ENCODE measurements at regions of chr1 and their contacts with region 1.

Region 1: GRCh38 chr1:230708631-230709580 is 5.0 kb downstream of the AGT start:
- DNase-seq: peak; percentile 82 to 94 (median 90)
- ATAC-seq: peak; percentile 12 to 77 (median 51)
- H3K4me3 ChIP-seq: peak overlapping the region in 2 of 3 donors; percentile 81 to 82
- H3K27ac ChIP-seq: peak overlapping the region in 2 of 3 donors; percentile 32 to 97
- H3K4me1 ChIP-seq: peaks cover 0 to 19% (median 3%) of the 10 kb centered on the region in 4 donors
- H3K27me3 ChIP-seq: no peaks in the 10 kb centered on the region
- CTCF ChIP-seq: no peak
- POLR2A ChIP-seq: peak; percentile 48

Region 2: DNA sequence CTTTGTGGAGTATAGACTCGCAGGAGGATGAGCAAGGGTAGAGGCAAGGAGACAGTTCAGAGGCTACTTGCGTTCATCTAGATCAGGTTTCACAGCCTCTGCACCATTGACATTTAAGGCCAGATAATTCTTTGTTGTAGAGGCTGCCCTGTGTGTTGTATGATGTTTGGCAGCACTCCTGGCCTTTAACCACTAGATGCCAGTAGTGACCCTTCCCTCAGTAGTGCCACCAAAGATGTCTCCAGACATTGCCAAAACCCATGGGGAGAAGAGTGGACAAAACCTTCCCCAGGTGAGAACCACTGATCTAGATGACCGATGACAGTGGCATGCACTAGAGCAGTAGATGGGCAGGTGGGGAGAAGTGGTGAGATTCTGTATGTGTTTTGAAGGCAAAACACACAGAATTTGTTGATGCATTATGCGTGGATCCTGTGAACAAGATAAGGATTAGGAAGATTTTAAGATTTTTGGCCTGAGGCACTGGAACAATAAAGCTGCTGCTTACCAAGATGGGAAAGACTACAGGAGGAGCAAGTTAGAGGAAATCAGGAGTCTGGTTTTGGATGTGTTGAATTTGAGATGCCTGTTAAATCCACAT is 76.5 kb before region 1 on chr1:
- intact Hi-C with region 1: loop called in 1 of 2 experiments (anchors 10 kb)
- DNase-seq: peak in 1 of 3 donors; percentile 59
- ATAC-seq: peak; percentile 96 to 99 (median 97)
- H3K4me3 ChIP-seq: no peak overlapping the region
- H3K27ac ChIP-seq: no peak overlapping the region
- H3K4me1 ChIP-seq: no peaks in the 10 kb centered on the region
- H3K27me3 ChIP-seq: no peaks in the 10 kb centered on the region
- CTCF ChIP-seq: peak; percentile 67 to 85 (median 78)
- POLR2A ChIP-seq: no peak

Region 3: GRCh38 chr1:230642263-230642959 is 66.5 kb before region 1 on chr1 and contains the start of gene COG2:
- intact Hi-C with region 1: loop called (anchors 10 kb)
- DNase-seq: peak; percentile 93 to 95 (median 94)
- ATAC-seq: peak; percentile 94 to 96 (median 95)
- H3K4me3 ChIP-seq: peak within 1 kb of the TSS; percentile 76 to 95 (median 94)
- H3K27ac ChIP-seq: peak within 1 kb of the TSS; percentile 68 to 82 (median 73)
- H3K4me1 ChIP-seq: peaks cover 0 to 40% (median 14%) of the 10 kb centered on the region in 4 donors
- H3K27me3 ChIP-seq: no peaks in the 10 kb centered on the region
- CTCF ChIP-seq: peak; percentile 100
- POLR2A ChIP-seq: peak; percentile 81
- total RNA-seq, gene COG2: 9.0 to 18.7 (median 13.0) TPM

Region 4: GRCh38 chr1:230753586-230754251 is 44.8 kb after region 1 on chr1:
- intact Hi-C with region 1: no loop called
- DNase-seq: peak in 1 of 3 donors; percentile 43
- ATAC-seq: peak in 3 of 4 donors; percentile 28 to 65 (median 38)
- H3K4me3 ChIP-seq: no peak overlapping the region
- H3K27ac ChIP-seq: no peak overlapping the region
- H3K4me1 ChIP-seq: no peaks in the 10 kb centered on the region
- H3K27me3 ChIP-seq: no peaks in the 10 kb centered on the region
- CTCF ChIP-seq: no peak
- POLR2A ChIP-seq: no peak

Region 5: DNA sequence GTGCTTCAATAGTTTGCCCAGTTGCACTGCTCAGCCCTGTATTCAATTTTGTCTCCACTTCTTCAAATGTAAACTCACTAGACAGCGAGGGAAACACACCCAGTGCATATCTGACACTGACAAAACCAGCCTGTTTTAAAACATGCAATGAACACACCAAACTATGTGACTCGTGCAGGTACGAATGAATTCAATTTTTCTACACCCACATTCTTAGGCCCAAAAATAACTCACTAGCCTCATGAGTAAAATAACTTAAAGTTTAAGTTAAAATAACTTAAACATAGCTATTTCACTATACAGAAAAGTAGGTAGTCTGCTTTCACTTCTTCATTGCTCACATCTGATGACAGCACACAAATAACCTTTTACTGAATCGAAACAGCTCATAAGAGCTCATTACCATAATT is 248.7 kb after region 1 on chr1:
- intact Hi-C with region 1: no loop called
- DNase-seq: no peak
- ATAC-seq: no peak
- H3K4me3 ChIP-seq: no peak overlapping the region
- H3K27ac ChIP-seq: no peak overlapping the region
- H3K4me1 ChIP-seq: no peaks in the 10 kb centered on the region
- H3K27me3 ChIP-seq: no peaks in the 10 kb centered on the region
- CTCF ChIP-seq: no peak
- POLR2A ChIP-seq: no peak

Measured in right lobe of liver (tissue), 6 donors.